Activated CD4-positive, alpha-beta memory T cell treated with anti-CD3 and anti-CD28 coated beads for 36 hours (primary cell): ENCODE measurements at regions of chr10 and their contacts with region 1.

Region 1: DNA sequence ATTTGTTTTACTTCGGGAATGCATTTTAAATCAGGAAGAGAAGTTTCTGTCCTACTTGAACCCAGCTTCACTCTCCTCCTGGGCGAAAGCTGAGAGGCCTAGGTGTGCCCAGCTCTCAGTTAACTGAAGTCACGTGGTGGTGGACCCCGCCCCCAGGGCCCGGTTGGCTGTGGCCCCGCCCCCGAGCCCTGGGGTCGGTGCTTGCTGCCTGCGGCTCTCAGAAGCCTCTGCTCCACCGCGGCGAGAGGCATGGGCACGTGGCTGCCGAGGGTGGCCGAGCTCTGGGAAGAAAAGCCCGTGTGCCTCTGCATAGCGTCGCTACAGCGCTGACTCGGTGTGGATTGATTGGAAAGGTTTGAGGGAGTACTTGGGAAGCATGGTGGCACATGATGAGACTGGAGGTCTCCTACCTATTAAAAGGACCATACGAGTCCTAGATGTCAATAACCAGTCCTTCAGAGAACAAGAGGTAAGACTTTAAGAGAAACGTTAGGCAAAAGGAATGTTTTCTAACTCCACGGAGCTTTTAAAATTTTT is 34.1 kb downstream of the NET1 start:
- DNase-seq: peak; percentile 74
- H3K4me3 Mint-ChIP-seq: peak overlapping the region; percentile 65
- H3K27ac Mint-ChIP-seq: peak overlapping the region; percentile 3
- H3K4me1 Mint-ChIP-seq: peaks cover 45% of the 10 kb centered on the region
- H3K27me3 Mint-ChIP-seq: no peaks in the 10 kb centered on the region

Region 2: GRCh38 chr10:4813023-4813422 is 633.4 kb before region 1 on chr10:
- CTCF ChIA-PET with region 1: interaction called, 10 read pairs
- POLR2A ChIA-PET with region 1: no interaction called
- intact Hi-C with region 1: no loop called
- DNase-seq: no peak
- H3K4me3 Mint-ChIP-seq: no peak overlapping the region
- H3K27ac Mint-ChIP-seq: no peak overlapping the region
- H3K4me1 Mint-ChIP-seq: no peaks in the 10 kb centered on the region
- H3K27me3 Mint-ChIP-seq: peaks cover 5% of the 10 kb centered on the region

Region 3: DNA sequence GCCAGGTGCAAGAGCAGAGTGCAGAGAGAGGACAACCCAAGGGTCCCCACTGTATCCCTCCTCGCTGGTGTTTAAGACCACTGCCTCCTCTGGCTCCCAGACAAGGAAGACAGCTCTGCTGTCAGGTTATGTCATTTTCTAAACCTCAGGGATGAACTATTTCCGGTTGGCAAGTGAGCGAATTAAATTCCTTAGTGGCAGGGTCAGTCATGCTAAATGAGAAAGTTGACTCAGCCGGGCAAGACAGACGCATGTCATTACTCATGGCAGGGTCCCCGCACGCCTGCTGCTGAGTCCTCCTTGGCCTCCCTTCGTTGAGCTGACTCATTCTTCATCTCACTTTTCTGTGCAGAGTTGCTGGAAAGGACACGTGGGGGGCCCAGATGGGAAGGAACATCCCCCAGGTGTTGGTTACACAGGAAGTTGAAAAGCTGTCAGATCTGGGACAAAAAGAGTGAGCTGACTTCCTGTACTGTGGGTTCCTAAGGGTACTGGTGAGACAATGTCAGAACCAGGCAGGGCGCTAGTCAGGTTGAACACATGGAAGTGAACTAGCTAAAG is 128.8 kb before region 1 on chr10:
- CTCF ChIA-PET with region 1: interaction called, 3 read pairs
- POLR2A ChIA-PET with region 1: no interaction called
- intact Hi-C with region 1: loop called (anchors 5 kb)
- DNase-seq: peak; percentile 94
- H3K4me3 Mint-ChIP-seq: peak overlapping the region; percentile 55
- H3K27ac Mint-ChIP-seq: peak overlapping the region; percentile 92
- H3K4me1 Mint-ChIP-seq: peaks cover 76% of the 10 kb centered on the region
- H3K27me3 Mint-ChIP-seq: no peaks in the 10 kb centered on the region

Region 4: DNA sequence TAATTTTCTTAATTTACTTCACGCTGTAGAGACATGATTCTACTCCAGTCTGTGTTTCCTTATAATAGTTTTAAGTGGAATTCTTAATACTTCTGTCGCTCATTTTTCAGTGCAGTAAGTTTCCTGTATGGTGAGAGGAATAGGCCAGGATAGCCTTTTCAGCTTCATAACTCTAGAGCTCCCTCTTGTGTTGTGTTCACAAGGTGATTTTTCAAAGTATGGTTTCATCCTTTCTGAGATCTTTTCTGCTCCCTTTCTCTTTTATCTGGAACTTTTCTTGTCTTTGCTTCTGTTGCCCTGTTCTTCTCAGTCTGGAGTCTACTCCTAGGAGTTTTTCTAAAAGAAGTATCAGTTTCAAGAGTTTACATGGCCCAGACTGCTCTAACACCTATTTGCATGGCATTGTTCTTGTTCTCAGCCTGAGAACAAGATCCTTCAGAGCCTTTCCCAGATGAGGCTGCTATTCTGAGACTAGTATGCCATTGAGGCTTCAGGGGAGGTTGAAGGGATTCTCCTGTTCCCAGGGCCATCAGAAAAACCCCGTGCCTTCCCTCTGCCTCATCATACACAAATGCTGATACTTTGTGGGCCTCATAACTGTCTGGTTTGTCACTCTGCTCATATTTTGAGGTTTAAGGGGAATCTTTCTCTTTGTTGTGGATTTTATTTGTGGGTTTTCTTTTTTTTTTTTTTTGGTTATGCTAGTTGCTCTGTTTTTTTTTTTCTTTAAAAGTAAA is 12.3 kb before region 1 on chr10:
- CTCF ChIA-PET with region 1: interaction called, 19 read pairs
- POLR2A ChIA-PET with region 1: no interaction called
- intact Hi-C with region 1: no loop called
- DNase-seq: no peak
- H3K4me3 Mint-ChIP-seq: no peak overlapping the region
- H3K27ac Mint-ChIP-seq: no peak overlapping the region
- H3K4me1 Mint-ChIP-seq: peaks cover 17% of the 10 kb centered on the region
- H3K27me3 Mint-ChIP-seq: no peaks in the 10 kb centered on the region

Region 5: GRCh38 chr10:5563991-5564536 is 117.6 kb after region 1 on chr10:
- CTCF ChIA-PET with region 1: no interaction called
- POLR2A ChIA-PET with region 1: no interaction called
- intact Hi-C with region 1: loop called (anchors 5 kb)
- DNase-seq: peak; percentile 78
- H3K4me3 Mint-ChIP-seq: peak overlapping the region; percentile 45
- H3K27ac Mint-ChIP-seq: peak overlapping the region; percentile 77
- H3K4me1 Mint-ChIP-seq: peaks cover 39% of the 10 kb centered on the region
- H3K27me3 Mint-ChIP-seq: peaks cover 3% of the 10 kb centered on the region

Region 6: DNA sequence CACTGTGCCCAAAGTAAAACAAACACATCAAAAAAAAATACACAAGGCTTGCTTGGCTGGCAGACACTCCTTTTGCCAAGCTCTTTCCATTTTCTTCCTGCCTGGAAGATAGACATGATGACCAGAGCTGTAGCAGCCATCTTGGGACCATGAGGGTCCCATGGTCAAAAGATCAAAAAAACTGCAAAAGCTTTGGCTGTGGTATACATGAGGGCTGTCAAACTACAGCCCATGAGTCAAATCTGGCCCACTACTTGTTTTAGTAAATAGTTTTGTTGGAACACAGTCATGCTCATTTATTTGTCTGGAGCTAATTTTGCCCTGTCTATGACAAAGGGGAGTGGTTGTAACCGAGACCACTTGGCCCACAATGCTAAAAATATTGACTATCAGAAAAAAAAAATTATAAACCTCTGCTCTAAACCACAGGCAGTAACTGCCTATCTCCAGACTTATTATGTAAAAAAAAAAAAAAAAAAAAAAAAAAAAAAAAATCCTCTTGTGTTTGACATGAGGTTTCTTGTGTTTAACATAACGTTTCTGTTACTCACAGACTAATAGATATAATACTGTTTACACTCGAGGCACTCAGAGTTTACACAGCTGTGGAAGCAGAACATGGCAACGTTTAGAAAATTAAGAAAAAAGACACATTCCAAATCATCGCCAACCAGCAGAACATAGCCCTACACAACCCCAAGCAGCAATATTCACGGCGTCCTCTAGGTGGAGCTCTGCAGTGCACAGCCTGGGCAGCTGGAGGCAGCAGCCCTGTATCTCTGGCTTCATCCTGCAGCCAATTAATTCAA is 183.0 kb after region 1 on chr10:
- CTCF ChIA-PET with region 1: interaction called, 237 read pairs
- POLR2A ChIA-PET with region 1: interaction called, 3 read pairs
- intact Hi-C with region 1: loop called (anchors 1 kb)
- DNase-seq: peak; percentile 91
- H3K4me3 Mint-ChIP-seq: peak overlapping the region; percentile 14
- H3K27ac Mint-ChIP-seq: peak overlapping the region; percentile 69
- H3K4me1 Mint-ChIP-seq: peaks cover 31% of the 10 kb centered on the region
- H3K27me3 Mint-ChIP-seq: peaks cover 3% of the 10 kb centered on the region